ENCODE measurements at regions of chr12 and their contacts with region 1.

Region 1: DNA sequence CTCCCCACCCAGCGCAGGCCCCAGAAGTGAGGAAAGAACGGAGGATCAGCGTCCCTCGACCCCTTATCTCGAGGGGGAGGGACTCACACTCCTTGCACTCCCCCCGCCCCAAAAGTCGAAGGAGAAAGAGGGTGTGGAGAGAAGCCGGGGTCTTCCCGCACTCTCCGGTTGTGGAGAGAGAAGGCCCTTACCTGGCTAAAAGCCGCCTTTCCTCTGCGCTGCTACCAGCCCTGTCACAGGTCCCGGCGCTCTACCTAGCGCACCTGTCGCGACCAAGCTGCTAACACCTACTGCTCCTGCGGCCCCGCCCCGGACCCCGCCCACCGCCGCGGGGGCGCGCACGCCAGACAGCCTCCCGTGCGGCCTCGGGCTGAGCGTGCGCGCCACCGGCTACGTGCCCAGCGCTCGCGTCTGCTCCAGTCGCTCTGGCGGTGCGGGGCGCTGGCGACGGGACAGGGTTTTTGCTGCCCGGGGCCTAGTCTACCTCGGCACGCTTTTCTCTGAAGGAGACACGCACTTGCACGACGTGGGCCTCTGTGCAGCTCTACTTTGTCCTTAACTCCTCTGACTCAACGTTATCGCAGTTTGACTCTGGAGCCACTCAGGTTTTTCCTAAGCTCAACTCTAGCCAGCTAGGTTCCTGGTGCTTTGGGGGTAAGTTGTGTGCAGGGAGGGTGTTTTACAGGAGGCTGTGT is at the start of gene LIMA1:
- DNase-seq: peak; percentile 95 to 99
- H3K4me3 ChIP-seq: peak within 1 kb of the TSS; percentile 90
- H3K4me3 Mint-ChIP-seq: peak within 1 kb of the TSS; percentile 96
- H3K27ac Mint-ChIP-seq: peak within 1 kb of the TSS; percentile 90
- H3K4me1 ChIP-seq: peaks cover 6% of the 10 kb centered on the region; the same call in 1 of the 2 replicates
- H3K4me1 Mint-ChIP-seq: peaks cover 19% of the 10 kb centered on the region
- H3K27me3 ChIP-seq: no peaks in the 10 kb centered on the region
- H3K27me3 Mint-ChIP-seq: no peaks in the 10 kb centered on the region
- CTCF ChIP-seq: peak; percentile 18 to 46
- total RNA-seq, gene LIMA1: 50.3 and 53.5 TPM in 2 replicates

Region 2: DNA sequence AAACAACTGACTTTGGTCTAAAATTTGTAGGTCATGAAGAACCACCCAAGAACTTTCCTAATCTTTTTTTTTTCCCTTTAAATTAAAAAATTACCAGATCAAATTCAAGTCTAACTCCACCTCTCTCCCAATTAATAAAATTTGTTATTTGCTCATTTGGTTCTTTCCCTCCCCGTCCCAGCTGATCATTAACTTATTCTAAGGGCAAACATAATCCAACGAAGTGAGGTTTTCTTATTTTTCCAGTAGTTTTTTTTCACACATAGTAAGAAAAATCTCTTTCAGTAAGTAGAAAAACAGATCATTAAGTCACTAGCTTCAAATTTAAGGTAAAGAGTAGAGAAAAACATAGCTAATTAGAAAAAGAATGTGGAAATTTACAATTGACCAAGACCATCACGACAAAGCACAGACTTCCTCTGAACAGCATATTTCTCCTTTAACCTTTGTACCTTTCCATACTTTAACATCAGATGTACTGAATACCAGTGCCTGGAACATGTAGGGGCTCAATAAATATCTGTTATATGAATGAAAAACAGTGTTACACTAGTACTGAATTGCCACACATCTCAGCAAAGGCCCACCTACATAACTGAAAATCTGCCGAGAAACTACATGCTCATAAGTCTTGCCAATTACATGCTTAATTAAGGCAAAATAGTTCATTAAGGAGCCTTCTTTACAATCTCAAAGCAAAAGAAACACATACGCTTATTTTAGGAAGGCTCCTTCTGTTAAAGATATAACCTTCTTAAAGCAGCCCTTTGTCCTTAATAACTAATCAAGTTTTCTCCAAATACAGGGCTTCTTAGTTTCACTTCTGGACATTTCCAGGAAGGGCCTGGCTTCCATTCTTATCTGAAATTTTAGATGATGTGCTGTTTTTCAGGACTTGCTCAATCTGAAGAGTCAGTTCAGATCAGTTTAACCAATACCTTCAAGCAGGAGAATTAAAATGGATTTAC is 11.8 kb before region 1 on chr12:
- CTCF ChIA-PET with region 1: interaction called, 8 read pairs
- POLR2A ChIA-PET with region 1: interaction called, 8 read pairs
- intact Hi-C with region 1: loop called (anchors 1 kb)
- DNase-seq: peak in 1 of 2 experiments; percentile 41
- H3K4me3 ChIP-seq: no peak overlapping the region
- H3K4me3 Mint-ChIP-seq: peak overlapping the region; percentile 44
- H3K27ac Mint-ChIP-seq: peak overlapping the region; percentile 84
- H3K4me1 ChIP-seq: peaks cover 44% of the 10 kb centered on the region
- H3K4me1 Mint-ChIP-seq: peaks cover 31% of the 10 kb centered on the region
- H3K27me3 ChIP-seq: no peaks in the 10 kb centered on the region
- H3K27me3 Mint-ChIP-seq: no peaks in the 10 kb centered on the region
- CTCF ChIP-seq: no peak

Region 3: DNA sequence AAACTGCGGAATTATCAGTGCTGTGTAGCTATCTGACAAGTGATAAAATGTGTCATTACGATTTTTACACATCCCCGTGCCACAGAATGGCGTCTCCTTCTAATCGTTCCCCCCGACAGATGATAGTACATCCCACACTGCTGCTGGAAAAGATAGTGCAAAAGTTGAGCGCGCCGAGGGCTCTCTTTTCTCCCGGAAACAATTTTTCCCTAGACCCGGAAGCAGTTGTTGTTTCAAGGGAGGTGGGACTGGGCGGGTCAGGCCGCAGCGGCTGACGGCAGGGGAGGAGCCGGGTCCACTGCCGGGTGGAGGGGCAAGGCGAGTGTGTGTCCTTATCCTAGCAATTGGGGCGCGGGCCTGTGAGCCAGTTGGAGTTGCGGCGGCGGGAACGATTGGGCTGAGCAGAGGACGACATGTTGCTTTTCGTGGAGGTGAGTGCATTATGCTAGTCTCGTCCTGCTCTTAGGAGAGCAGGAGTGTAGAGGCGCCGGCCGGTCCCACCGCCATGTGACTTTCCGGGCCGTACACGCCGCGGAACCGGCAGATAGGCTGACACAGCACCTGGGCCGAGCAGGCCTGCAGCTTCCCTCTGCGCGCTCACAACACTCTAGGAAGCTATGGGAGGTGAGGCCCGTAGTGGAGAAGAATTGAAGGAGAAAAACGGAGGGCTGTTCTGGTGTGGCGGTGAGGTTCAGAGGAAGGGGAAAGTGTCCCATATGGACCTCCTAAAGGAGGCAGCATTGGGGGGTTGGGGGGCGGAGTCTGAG is 117.4 kb after region 1 on chr12 and contains the start of gene LARP4:
- CTCF ChIA-PET with region 1: no interaction called
- POLR2A ChIA-PET with region 1: no interaction called
- intact Hi-C with region 1: loop called (anchors 5 kb)
- DNase-seq: peak; percentile 98
- H3K4me3 ChIP-seq: peak within 1 kb of the TSS; percentile 83
- H3K4me3 Mint-ChIP-seq: peak within 1 kb of the TSS; percentile 99
- H3K27ac Mint-ChIP-seq: peak within 1 kb of the TSS; percentile 100
- H3K4me1 ChIP-seq: peaks cover 36% of the 10 kb centered on the region
- H3K4me1 Mint-ChIP-seq: peaks cover 34% of the 10 kb centered on the region
- H3K27me3 ChIP-seq: no peaks in the 10 kb centered on the region
- H3K27me3 Mint-ChIP-seq: no peaks in the 10 kb centered on the region
- CTCF ChIP-seq: no peak
- total RNA-seq, gene LARP4: 103 and 115 TPM in 2 replicates

Measured in Caco-2 (cell line).